Tibial artery (tissue), 4 donors: ENCODE measurements at regions of chr13 and their contacts with region 1.

Region 1: DNA sequence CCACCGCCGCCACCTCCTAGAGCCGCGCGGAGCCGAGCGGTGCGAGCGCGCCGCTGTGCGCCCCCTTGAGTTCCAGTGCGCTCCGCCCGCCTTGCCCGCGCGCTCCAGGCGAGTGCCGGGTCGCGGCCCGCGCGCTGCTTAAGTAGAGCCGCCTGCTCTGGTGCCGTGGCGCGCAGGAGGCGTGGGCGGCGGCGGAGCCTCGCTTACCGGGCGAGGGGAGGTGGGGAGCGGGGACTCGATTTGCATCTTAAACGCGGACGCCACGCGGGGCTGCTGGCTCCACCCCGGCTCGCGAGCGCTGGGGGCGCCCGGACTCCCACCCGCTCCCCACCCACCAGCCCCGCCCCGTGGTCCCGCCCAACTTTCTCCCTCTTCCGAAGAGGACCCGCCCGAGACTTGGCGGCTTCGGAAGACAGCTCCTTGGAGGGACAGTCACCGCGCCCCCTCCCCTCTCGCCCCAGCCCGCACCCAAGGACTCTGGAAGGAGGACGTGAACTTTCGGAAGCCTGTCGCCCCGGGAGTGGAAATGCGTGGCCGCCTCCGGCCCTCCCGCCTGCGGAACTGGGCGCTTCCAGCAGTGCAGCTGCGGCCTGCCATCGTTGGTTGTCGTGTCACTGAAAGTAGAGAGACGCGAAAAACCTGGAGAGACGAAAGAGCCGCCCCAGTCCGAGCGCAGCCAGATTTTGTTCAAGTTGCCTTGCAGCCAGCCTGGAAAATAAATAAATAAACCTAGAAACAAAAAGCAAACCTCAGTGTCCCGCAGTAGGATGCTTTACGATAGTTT is at the start of gene KCTD12:
- DNase-seq: peak; percentile 90 to 94
- H3K4me3 ChIP-seq: peak within 1 kb of the TSS; percentile 69 to 78
- H3K27ac ChIP-seq: peak within 1 kb of the TSS; percentile 87 to 88
- H3K4me1 ChIP-seq: peaks cover 0 to 27% (median 12%) of the 10 kb centered on the region in 4 donors
- H3K27me3 ChIP-seq: no peaks in the 10 kb centered on the region
- CTCF ChIP-seq: peak in 1 of 2 experiments; percentile 34

Region 2: DNA sequence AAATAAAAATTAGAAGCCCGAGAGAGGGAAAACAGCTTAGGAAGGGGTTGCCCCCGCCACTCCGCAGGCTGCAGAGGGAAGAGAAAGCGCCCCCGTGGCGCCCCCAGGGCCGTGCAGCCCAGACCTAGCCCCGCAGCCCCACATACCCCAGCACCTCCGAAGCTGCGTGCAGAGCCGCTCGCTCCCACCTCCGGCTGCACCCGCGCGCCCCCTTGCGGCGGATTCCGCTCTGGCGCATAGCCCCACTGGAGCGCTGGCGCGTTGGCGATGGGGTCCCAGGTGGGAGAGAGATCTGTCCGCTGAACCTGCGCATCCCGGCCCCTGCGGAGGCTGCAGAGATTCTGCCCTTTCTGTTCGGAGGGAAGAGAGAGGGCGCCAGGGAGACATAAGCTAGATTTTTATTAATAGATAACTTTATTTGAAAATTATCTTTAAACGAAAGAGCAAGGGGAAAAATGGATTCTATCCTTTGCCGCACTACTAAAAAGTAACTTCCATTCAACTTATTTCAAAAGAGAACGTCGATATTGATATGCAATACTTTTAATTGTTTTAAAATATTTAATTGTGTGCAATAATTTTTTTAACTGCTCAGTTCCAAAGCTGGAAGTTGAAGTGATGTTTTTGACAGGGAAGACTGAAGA is 93.7 kb after region 1 on chr13:
- intact Hi-C with region 1: loop called (anchors 10 kb)
- DNase-seq: peak; percentile 73 to 83
- H3K4me3 ChIP-seq: peak overlapping the region; percentile 23 to 47
- H3K27ac ChIP-seq: no peak overlapping the region
- H3K4me1 ChIP-seq: peaks cover 0 to 11% (median 9%) of the 10 kb centered on the region in 4 donors
- H3K27me3 ChIP-seq: no peaks in the 10 kb centered on the region
- CTCF ChIP-seq: peak; percentile 78 to 97

Region 3: GRCh38 chr13:77386880-77387606 is 500.6 kb after region 1 on chr13:
- intact Hi-C with region 1: loop called (anchors 10 kb)
- DNase-seq: peak; percentile 81 to 86
- H3K4me3 ChIP-seq: no peak overlapping the region
- H3K27ac ChIP-seq: peak overlapping the region; percentile 76 to 81
- H3K4me1 ChIP-seq: peaks cover 0 to 64% (median 39%) of the 10 kb centered on the region in 4 donors
- H3K27me3 ChIP-seq: no peaks in the 10 kb centered on the region
- CTCF ChIP-seq: no peak

Region 4: GRCh38 chr13:78476910-78477309 is 1590.4 kb after region 1 on chr13:
- intact Hi-C with region 1: no loop called
- DNase-seq: no peak
- H3K4me3 ChIP-seq: no peak overlapping the region
- H3K27ac ChIP-seq: no peak overlapping the region
- H3K4me1 ChIP-seq: no peaks in the 10 kb centered on the region
- H3K27me3 ChIP-seq: no peaks in the 10 kb centered on the region
- CTCF ChIP-seq: no peak